ENCODE measurements at regions of chr19 and their contacts with region 1.

Region 1: DNA sequence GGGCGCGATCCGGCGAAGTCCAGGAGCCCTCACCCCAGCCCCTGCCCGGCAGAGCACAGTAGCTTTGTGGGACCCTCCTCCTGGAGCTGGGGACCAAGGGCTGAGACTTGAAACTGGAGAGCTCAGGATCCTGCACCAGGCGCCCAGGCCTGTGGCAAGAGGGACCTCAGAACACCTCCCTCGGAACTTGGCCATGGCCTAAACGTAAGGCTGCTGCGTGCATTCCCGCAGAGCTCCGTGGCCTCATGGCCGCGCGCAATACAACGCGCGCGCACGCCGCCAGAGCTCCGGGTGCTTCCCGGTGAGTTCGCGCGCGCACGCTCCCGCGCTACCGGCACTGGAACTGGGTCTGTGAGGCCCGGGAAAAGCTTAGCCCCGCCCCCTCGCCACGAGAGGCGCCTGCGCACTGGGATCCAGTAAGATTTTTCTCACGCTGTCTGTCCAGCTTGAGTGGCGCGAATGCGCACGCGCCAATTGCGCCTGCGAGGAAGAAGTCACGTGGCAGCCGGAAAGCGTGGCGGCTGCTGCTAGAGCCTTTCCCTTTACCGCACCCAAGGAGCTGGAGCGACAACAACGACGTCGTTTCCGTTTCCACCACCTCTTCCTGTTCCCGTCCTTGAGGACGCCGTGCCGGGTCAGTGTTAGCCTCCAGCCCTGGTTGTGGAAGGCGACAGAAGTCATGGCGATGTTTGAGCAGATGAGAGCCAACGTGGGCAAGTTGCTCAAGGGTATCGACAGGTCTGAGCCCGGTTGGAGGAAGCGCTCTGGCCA is at the start of gene EIF3K:
- DNase-seq: peak; percentile 99
- H3K4me3 Mint-ChIP-seq: peak within 1 kb of the TSS; percentile 100
- H3K27ac Mint-ChIP-seq: peak within 1 kb of the TSS; percentile 99
- H3K4me1 Mint-ChIP-seq: peaks cover 8% of the 10 kb centered on the region
- H3K27me3 Mint-ChIP-seq: no peaks in the 10 kb centered on the region
- CTCF ChIP-seq: no peak
- total RNA-seq, gene EIF3K: 342 and 375 TPM in 2 replicates

Region 2: GRCh38 chr19:38433268-38433733 is 185.5 kb before region 1 on chr19 and contains the start of gene RYR1:
- CTCF ChIA-PET with region 1: no interaction called
- POLR2A ChIA-PET with region 1: no interaction called
- intact Hi-C with region 1: no loop called
- DNase-seq: peak; percentile 44
- H3K4me3 Mint-ChIP-seq: no peak within 1 kb of the TSS
- H3K27ac Mint-ChIP-seq: no peak within 1 kb of the TSS
- H3K4me1 Mint-ChIP-seq: no peaks in the 10 kb centered on the region
- H3K27me3 Mint-ChIP-seq: peaks cover 30% of the 10 kb centered on the region
- CTCF ChIP-seq: no peak
- total RNA-seq, gene RYR1: 0.28 and 0.32 TPM in 2 replicates

Region 3: DNA sequence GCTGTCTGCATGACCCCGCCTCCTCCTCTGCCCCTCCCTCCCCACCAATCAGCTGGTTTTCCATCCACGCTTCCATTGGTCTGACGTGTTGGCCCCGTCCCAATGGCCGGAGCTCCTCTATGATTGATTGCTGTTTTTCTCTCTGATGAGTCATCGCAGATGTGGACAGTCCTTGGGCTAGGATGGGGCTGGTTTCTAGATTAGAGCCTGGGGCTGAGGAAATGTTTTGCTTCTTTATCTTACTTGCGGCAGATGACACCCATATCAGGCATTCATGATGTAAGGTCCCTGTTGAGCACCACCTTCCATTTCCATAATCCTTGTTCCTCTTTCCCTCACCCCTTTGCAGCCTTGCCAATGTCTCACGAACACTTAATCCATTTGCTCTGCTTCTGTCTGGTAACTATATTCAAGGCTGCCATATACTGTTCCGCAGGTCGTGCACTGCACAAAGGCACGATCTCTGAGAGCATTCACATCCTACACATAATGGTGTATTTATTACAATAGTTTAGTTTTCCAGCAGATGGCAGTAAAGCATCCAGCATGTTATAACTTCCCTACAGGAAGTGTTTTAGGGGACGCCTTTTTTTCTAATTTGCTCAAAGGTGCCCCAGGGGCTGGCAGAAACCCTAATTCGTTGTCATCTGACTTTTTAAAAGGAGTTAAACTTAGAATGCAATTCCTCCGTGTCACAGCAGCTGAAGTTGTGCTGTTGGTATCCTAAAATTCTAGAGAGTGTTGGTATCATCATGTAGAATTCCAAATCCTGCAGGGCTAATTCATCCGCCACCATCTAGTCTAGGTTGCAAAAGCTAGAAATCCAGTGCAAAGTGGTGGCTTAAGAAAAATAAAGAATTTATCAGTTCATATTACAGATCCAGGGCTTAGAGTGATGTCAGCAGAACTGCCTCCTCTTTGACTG is 74.5 kb before region 1 on chr19:
- CTCF ChIA-PET with region 1: interaction called, 9 read pairs
- POLR2A ChIA-PET with region 1: interaction called, 16 read pairs
- intact Hi-C with region 1: loop called (anchors 5 kb)
- DNase-seq: peak; percentile 93
- H3K4me3 Mint-ChIP-seq: peak overlapping the region; percentile 56
- H3K27ac Mint-ChIP-seq: no peak overlapping the region
- H3K4me1 Mint-ChIP-seq: peaks cover 12% of the 10 kb centered on the region
- H3K27me3 Mint-ChIP-seq: no peaks in the 10 kb centered on the region
- CTCF ChIP-seq: peak; percentile 66

Region 4: DNA sequence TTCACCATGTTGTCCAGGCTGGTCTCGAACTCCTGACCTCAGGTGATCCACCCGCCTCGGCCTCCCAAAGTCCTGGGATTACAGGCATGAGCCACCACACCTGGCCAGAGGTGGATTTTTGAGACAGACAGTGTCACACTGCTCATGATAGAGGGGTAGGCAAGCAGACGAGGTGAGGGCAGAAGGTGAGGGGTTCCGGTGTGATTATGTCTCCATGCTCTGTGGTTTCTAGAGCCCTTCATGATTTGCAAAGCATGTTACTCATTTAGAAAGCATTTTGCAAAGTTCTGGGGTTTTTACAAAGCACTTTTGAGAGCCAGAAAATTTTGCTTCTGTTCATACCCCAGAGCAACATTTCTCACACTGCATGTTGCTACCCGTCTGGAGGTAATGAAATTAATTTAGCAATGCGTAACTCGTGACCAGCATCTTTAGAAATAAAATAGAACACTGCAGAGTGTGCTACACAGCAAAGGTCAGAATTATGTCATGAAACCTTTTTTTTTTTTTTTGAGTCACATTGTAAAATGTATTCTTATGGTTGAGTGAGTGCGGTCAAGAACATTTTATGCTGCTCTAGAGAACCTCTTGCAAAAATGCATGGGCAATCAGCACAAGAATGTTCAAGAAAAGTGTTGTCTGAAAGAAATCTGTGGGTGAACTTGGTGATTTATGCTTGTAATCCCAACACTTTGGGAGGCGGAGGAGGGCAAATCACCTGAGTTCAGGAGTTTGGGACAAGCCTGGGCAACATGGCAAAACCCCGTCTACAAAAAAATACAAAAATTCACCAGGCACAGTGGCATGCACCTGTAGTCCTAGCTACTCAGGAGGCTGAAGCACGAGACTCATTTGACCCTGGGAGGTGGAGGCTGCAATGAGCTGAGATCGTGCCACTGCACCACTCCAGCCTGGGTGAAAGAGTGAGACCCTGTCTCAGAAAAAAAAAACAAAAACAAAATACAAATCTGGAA is 59.1 kb before region 1 on chr19:
- CTCF ChIA-PET with region 1: no interaction called
- POLR2A ChIA-PET with region 1: interaction called, 19 read pairs
- intact Hi-C with region 1: loop called (anchors 5 kb)
- DNase-seq: peak; percentile 87
- H3K4me3 Mint-ChIP-seq: peak overlapping the region; percentile 10
- H3K27ac Mint-ChIP-seq: peak overlapping the region; percentile 82
- H3K4me1 Mint-ChIP-seq: peaks cover 28% of the 10 kb centered on the region
- H3K27me3 Mint-ChIP-seq: no peaks in the 10 kb centered on the region
- CTCF ChIP-seq: no peak

Region 5: DNA sequence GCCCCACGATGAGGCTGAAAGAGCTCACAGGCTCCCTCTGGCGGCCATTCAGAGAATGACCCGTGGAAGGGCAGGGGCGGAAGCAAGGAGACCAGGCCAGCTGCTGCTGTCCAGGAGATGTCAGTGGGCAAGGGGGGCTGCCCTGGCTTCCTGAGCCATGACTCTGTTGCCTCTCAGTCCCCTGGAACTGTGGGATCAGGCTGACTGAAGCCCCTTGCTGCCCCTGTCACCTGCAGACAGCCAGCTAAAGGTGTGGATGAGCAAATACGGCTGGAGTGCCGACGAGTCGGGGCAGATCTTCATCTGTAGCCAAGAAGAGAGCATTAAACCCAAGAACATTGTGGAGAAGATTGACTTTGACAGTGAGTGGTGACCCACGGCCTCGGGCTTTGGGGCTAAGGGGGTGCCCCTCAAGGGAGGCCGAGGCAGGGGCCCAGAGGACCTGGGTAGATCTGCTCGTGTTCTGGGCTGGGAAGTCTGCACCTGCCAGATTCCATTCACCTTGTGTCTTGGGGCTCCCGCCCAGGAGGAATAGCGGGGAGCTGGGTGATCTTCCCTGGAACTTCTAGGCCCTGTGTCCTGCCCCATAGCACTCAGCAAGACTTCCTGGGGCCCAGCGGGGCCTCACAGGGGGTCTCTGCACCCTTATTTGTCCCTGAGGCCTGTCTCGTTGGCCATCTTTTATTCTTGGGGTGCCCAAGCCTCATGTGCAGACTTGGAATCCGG is 16.1 kb after region 1 on chr19:
- CTCF ChIA-PET with region 1: interaction called, 46 read pairs
- POLR2A ChIA-PET with region 1: interaction called, 16 read pairs
- intact Hi-C with region 1: no loop called
- DNase-seq: peak; percentile 80
- H3K4me3 Mint-ChIP-seq: no peak overlapping the region
- H3K27ac Mint-ChIP-seq: peak overlapping the region; percentile 24
- H3K4me1 Mint-ChIP-seq: peaks cover 17% of the 10 kb centered on the region
- H3K27me3 Mint-ChIP-seq: no peaks in the 10 kb centered on the region
- CTCF ChIP-seq: peak; percentile 91

Measured in MCF 10A (cell line).